Activated CD4-positive, alpha-beta T cell treated with anti-CD3 and anti-CD28 coated beads for 36 hours (primary cell): ENCODE measurements at regions of chr19 and their contacts with region 1.

Region 1: GRCh38 chr19:51327066-51328001 is 14.6 kb downstream of the VSIG10L start:
- DNase-seq: peak; percentile 87
- ATAC-seq: peak; percentile 93
- H3K4me3 Mint-ChIP-seq: peak overlapping the region; percentile 35
- H3K27ac Mint-ChIP-seq: no peak overlapping the region
- H3K4me1 Mint-ChIP-seq: peaks cover 8% of the 10 kb centered on the region
- H3K27me3 Mint-ChIP-seq: peaks cover 60% of the 10 kb centered on the region

Region 2: DNA sequence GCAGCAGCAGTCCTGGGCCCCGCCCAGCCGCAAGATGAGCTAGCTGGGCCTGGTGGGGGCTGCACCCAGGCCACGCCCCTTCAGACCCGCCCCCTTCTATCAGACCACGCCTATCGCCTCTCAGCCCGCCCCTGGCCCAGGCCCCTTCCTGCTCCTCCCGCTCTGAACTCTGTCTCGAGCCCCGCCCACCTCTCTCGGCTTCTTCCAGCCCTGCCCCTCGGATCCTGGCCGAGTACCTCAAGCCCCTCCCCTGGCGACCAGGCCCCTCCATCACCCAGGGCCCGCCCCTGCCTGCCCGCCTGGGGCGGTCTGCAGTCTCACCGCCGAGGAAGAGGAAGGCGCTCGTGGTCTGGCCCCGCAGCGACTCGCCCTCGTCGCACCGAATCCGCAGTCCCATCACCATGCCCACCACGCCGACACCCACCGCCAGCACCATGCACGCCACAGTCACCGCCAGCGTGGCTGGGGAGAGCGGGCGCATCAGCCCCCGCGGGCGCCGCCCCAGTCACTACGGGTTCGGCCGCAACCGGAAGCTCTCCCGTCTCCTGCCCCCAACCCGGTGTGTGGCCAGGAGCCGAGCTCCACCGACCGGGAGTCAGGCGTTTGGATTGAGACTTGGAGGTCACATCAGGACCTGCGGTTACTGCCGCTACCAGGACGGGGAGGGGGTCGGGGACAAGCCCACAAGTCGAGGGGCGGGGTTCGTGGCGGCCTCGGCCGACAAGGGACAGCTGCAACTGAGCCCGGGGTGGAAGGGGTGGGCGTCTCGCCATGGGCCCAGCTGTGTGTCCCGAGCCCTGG is 40.4 kb after region 1 on chr19:
- CTCF ChIA-PET with region 1: no interaction called
- POLR2A ChIA-PET with region 1: no interaction called
- intact Hi-C with region 1: loop called in 1 of 2 experiments (anchors 1 kb)
- DNase-seq: peak; percentile 99
- ATAC-seq: peak; percentile 83
- H3K4me3 Mint-ChIP-seq: peak overlapping the region; percentile 90
- H3K27ac Mint-ChIP-seq: peak overlapping the region; percentile 97
- H3K4me1 Mint-ChIP-seq: peaks cover 58% of the 10 kb centered on the region
- H3K27me3 Mint-ChIP-seq: no peaks in the 10 kb centered on the region